Natural killer cell (primary cell): ENCODE measurements at regions of chr19 and their contacts with region 1.

Region 1: DNA sequence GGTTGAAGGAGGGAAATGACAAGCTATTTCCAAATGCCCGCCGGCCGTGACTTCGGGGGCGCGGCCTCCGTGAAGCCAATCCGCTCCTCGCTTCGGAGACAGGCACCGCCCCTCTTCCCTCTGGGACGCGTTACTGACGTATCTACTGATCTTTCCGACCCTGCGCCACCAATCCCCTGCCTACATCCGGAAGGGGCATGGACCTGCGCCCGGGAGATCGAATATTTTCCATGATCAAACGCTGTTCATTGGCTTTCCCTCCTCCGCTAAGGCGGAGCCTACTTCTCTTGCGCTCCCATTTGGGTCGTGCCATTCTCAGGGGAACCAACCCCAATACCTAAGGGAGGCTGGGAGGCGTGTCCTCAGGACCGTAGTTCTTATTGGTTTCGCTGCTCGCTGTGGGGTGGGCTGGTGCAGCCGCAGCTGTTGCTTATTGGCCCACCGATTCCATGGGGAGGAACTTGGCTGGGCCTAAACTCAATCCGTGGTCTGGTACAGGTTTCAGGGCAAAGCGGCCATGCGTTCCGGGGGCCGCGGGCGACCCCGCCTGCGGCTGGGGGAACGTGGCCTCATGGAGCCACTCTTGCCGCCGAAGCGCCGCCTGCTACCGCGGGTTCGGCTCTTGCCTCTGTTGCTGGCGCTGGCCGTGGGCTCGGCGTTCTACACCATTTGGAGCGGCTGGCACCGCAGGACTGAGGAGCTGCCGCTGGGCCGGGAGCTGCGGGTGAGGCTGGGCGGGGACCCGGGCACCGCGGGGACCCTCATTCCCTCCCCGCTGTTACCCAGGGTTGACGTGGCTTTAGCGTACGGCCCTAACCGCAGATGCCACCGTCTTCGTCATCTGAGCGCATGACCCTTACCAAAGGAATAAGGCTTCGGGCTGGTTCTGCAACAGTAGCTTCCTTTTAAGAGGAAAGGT is at the start of gene QPCTL:
- DNase-seq: peak; percentile 93 to 99
- ATAC-seq: peak; percentile 81 to 95 (median 86)
- H3K4me3 ChIP-seq: peak within 1 kb of the TSS; percentile 60
- H3K4me3 Mint-ChIP-seq: peak within 1 kb of the TSS; percentile 98
- H3K27ac ChIP-seq: peak within 1 kb of the TSS; percentile 95
- H3K27ac Mint-ChIP-seq: peak within 1 kb of the TSS; percentile 91 to 95
- H3K4me1 ChIP-seq: peaks cover 22% of the 10 kb centered on the region
- H3K4me1 Mint-ChIP-seq: peaks cover 17 to 24% of the 10 kb centered on the region in 2 donors
- H3K27me3 ChIP-seq: no peaks in the 10 kb centered on the region
- H3K27me3 Mint-ChIP-seq: no peaks in the 10 kb centered on the region
- CTCF ChIP-seq: no peak
- total RNA-seq, gene QPCTL: 8.7 to 11.5 (median 10.0) TPM

Region 2: DNA sequence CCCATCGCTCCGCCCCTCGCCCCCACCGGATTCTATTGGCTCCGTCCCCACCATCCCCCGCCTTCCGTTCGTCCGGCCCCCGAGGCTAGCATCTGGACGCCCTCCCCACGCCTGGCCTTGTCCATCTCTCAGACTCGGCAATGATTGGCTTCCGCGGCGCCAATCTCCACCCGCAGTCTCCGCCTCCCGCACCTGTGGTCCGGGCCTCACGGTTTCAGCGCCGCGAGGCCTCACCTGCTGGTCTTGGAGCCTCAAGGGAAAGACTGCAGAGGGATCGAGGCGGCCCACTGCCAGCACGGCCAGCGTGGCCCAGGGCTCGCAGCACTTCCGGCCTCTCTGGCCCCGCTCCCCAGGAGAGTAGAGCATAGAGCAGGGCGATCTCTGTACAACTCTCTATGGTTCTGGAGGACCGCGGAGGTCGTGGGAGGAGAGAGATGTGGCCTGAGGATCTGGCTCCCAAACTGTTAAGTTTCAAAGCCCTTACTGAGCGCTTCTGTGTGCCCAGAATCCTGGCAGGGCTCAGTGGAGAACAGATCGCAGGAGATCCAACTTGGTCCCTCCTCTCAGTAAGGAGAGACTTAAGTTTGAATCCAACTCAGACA is 268.8 kb before region 1 on chr19 and contains the start of gene ERCC1:
- intact Hi-C with region 1: loop called (anchors 5 kb)
- DNase-seq: peak in 1 of 2 donors; percentile 74
- ATAC-seq: peak; percentile 69 to 84 (median 78)
- H3K4me3 ChIP-seq: peak within 1 kb of the TSS; percentile 78
- H3K4me3 Mint-ChIP-seq: peak within 1 kb of the TSS; percentile 96
- H3K27ac ChIP-seq: peak within 1 kb of the TSS; percentile 84
- H3K27ac Mint-ChIP-seq: peak within 1 kb of the TSS; percentile 92 to 96
- H3K4me1 ChIP-seq: peaks cover 46% of the 10 kb centered on the region
- H3K4me1 Mint-ChIP-seq: peaks cover 32 to 50% of the 10 kb centered on the region in 2 donors
- H3K27me3 ChIP-seq: no peaks in the 10 kb centered on the region
- H3K27me3 Mint-ChIP-seq: peaks cover 0 to 3% of the 10 kb centered on the region in 2 donors
- CTCF ChIP-seq: no peak
- total RNA-seq, gene ERCC1: 46.8 to 55.2 (median 48.2) TPM

Region 3: DNA sequence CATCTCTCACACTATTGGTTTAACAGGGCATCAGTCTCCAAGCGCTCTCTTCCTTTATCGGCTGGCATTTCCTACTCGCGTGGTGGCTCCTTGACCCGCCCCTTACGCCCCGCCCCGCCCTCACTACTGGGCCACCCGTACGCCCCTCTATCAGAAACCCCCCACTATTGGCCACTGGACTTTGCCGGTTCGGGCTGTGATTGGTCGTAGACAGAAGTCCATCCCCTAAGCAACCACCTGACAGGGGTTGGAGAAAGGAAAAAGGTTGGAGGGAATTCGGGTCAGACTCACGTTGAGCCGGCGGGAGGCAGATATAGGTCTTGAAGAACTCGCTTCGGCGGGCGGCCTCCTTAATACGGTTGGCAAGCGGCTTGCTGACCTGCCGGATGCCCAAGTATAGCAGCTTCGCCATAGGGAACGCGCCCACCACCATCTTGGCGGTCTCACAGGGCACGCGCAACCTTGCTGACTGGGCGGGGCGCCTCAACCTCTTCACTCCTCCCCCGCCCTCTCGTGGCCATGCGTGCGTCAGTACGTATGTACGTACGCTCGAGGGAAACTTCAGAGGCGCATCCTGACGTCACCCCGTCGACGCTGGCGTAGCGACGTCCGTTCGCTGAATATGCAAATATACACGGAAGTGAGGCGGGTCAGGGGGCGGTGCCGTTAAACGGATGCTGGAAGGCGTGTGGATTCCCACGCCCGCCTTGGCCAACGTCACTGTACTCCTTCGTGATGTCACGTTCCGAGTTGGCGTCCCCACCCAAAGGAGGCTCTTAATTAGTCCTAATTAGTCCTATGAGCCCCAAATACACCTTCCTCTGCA is 107.9 kb before region 1 on chr19 and contains the start of gene OPA3:
- intact Hi-C with region 1: loop called (anchors 1 kb)
- DNase-seq: peak; percentile 98 to 100
- ATAC-seq: peak; percentile 84 to 95 (median 84)
- H3K4me3 ChIP-seq: peak within 1 kb of the TSS; percentile 77
- H3K4me3 Mint-ChIP-seq: peak within 1 kb of the TSS; percentile 89
- H3K27ac ChIP-seq: peak within 1 kb of the TSS; percentile 96
- H3K27ac Mint-ChIP-seq: peak within 1 kb of the TSS; percentile 95 to 96
- H3K4me1 ChIP-seq: peaks cover 16% of the 10 kb centered on the region
- H3K4me1 Mint-ChIP-seq: peaks cover 14 to 33% of the 10 kb centered on the region in 2 donors
- H3K27me3 ChIP-seq: no peaks in the 10 kb centered on the region
- H3K27me3 Mint-ChIP-seq: peaks cover 4 to 6% of the 10 kb centered on the region in 2 donors
- CTCF ChIP-seq: no peak
- total RNA-seq, gene OPA3: 8.2 to 10.4 (median 9.0) TPM

Region 4: GRCh38 chr19:45653634-45654033 is 38.8 kb before region 1 on chr19:
- intact Hi-C with region 1: no loop called
- DNase-seq: no peak
- ATAC-seq: no peak
- H3K4me3 ChIP-seq: no peak overlapping the region
- H3K4me3 Mint-ChIP-seq: no peak overlapping the region
- H3K27ac ChIP-seq: no peak overlapping the region
- H3K27ac Mint-ChIP-seq: no peak overlapping the region
- H3K4me1 ChIP-seq: no peaks in the 10 kb centered on the region
- H3K4me1 Mint-ChIP-seq: no peaks in the 10 kb centered on the region
- H3K27me3 ChIP-seq: no peaks in the 10 kb centered on the region
- H3K27me3 Mint-ChIP-seq: peaks cover 0 to 1% of the 10 kb centered on the region in 2 donors
- CTCF ChIP-seq: no peak

Region 5: DNA sequence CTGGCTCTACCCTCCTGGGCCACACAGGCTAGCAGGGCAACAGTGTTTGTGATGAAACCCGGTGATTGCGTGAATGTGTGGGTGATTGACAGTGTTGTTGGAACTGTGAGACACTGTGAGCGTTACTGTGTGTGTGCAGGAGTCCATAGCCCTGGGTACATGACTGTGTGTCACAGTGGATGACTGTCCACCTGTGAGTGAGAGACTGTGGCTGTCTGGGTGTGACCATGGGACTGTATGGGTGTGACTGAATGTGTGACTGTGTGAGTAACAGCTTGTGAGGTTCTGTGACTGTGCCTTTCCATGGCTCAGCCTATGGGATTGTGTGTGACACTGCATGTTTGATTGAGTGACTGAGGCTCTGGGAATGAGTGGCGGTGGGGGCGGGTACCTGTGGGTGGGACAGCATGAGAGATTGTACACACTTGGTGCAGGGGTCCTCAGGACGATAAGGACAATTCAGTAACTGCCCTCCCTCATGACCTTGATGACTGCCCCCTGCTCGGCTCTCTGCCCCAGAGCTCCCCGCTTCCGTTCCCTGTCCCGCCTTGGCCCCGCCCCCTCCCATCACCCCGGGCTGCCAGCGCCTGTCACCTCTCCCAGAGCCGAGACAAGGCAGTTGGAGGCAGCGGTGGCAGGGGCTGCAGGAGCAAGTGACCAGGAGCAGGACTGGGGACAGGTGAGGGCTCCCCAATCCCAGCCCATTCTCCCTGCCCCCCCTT is 24.7 kb before region 1 on chr19 and contains the start of gene GIPR:
- intact Hi-C with region 1: loop called (anchors 1 kb)
- DNase-seq: peak; percentile 57 to 71
- ATAC-seq: peak; percentile 73 to 85 (median 78)
- H3K4me3 ChIP-seq: peak within 1 kb of the TSS; percentile 56
- H3K4me3 Mint-ChIP-seq: peak within 1 kb of the TSS; percentile 88
- H3K27ac ChIP-seq: peak within 1 kb of the TSS; percentile 12
- H3K27ac Mint-ChIP-seq: peak within 1 kb of the TSS; percentile 76 to 85
- H3K4me1 ChIP-seq: peaks cover 42% of the 10 kb centered on the region
- H3K4me1 Mint-ChIP-seq: peaks cover 31 to 45% of the 10 kb centered on the region in 2 donors
- H3K27me3 ChIP-seq: peaks cover 7% of the 10 kb centered on the region
- H3K27me3 Mint-ChIP-seq: peaks cover 0 to 12% of the 10 kb centered on the region in 2 donors
- CTCF ChIP-seq: no peak
- total RNA-seq, gene GIPR: 20.7 to 24.5 (median 21.5) TPM

Region 6: GRCh38 chr19:45730389-45731288 is 38.2 kb after region 1 on chr19 and contains the start of gene FBXO46:
- intact Hi-C with region 1: loop called (anchors 2 kb)
- DNase-seq: peak; percentile 81 to 97
- ATAC-seq: peak; percentile 99 to 100 (median 99)
- H3K4me3 ChIP-seq: peak within 1 kb of the TSS; percentile 84
- H3K4me3 Mint-ChIP-seq: peak within 1 kb of the TSS; percentile 95
- H3K27ac ChIP-seq: peak within 1 kb of the TSS; percentile 79
- H3K27ac Mint-ChIP-seq: peak within 1 kb of the TSS; percentile 90 to 97
- H3K4me1 ChIP-seq: peaks cover 20% of the 10 kb centered on the region
- H3K4me1 Mint-ChIP-seq: peaks cover 25 to 34% of the 10 kb centered on the region in 2 donors
- H3K27me3 ChIP-seq: no peaks in the 10 kb centered on the region
- H3K27me3 Mint-ChIP-seq: no peaks in the 10 kb centered on the region
- CTCF ChIP-seq: no peak
- total RNA-seq, gene FBXO46: 24.8 to 35.7 (median 31.1) TPM

Region 7: DNA sequence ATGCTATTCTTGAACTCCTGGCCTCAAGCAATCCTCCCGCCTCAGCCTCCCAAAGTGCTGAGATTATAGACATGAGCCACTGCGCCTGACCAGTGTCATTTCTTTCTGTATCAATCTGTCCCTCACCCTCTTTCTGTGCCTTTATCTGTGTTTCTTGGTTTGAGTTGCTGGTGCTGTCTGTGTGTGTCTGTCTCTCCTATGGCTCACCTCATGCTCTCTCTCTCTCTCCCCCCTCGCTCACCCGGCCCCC is 183.6 kb after region 1 on chr19:
- intact Hi-C with region 1: no loop called
- DNase-seq: no peak
- ATAC-seq: peak in 2 of 3 donors; percentile 49 to 59
- H3K4me3 ChIP-seq: no peak overlapping the region
- H3K4me3 Mint-ChIP-seq: peak overlapping the region; percentile 61
- H3K27ac ChIP-seq: no peak overlapping the region
- H3K27ac Mint-ChIP-seq: peak overlapping the region in 1 of 2 donors; percentile 76
- H3K4me1 ChIP-seq: peaks cover 15% of the 10 kb centered on the region
- H3K4me1 Mint-ChIP-seq: peaks cover 0 to 19% of the 10 kb centered on the region in 2 donors
- H3K27me3 ChIP-seq: no peaks in the 10 kb centered on the region
- H3K27me3 Mint-ChIP-seq: peaks cover 0 to 23% of the 10 kb centered on the region in 2 donors
- CTCF ChIP-seq: no peak